ENCODE measurements at regions of chr7 and their contacts with region 1.

Region 1: DNA sequence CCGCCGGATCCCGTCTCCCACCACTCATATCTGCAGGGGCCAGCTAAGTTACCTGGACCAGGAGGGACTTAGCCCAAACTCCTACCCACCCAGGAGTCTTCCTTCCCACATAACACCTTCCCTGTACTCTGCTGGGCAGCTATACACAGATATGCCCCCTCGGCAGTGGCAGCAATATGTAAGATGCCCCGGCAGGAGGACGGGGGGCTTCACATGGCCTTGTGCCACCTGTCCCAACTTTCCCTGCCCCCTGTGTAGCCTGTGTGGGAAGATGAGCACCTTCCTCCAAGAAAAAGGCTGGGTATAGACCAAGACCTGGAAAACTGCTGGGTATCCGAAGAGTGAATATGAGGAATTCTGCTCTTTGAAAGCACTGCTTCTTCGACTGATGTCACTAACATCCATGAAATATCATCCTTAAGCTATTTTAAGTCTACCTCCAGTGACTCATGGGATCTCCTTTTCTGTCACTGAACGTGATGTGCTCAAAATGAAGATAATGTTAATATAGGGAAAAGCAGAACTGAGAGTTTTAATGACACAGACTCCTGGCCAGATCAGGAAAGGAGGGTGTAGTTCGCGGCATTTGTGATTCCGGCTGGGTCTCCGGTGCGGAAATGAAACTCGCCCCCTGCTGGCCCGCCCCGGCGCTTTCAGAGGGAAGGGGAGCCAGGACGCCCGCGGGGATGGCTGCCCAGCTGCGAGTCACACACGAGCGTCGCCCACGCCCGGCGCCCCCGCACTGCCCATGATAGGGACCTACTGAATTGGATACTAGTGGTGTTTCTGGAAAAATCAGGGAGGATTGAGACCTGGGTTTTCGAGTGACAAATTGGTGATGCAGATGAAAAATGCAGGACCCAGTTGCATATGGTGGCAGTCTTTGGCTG is 256.9 kb upstream of the NFE2L3 start:
- DNase-seq: peak; percentile 70 to 83
- ATAC-seq: peak; percentile 75

Region 2: DNA sequence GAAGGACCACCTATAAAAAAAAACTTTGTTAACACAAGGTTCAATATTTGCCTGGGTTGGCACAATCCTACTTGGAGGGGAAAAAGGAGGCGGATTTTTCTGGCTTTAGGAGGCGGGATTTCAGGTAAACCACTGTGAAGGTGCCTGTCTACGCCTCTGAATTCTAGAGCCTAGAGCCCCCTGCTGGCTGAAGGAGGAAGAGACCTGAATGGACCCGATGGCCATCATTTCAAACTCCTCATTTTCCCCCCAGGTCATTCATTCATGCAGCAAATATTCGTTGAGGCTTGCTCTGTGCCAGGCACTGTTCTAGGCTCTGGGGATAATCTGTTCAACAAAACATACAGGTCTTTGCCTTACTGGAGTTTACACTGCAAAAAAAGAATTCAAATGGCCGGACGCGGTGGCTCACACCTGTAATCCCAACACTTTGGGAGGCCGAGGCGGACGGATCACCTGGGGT is 166.6 kb after region 1 on chr7:
- intact Hi-C with region 1: loop called in 1 of 2 experiments (anchors 5 kb)
- DNase-seq: peak; percentile 61 to 88
- ATAC-seq: peak; percentile 96

Region 3: DNA sequence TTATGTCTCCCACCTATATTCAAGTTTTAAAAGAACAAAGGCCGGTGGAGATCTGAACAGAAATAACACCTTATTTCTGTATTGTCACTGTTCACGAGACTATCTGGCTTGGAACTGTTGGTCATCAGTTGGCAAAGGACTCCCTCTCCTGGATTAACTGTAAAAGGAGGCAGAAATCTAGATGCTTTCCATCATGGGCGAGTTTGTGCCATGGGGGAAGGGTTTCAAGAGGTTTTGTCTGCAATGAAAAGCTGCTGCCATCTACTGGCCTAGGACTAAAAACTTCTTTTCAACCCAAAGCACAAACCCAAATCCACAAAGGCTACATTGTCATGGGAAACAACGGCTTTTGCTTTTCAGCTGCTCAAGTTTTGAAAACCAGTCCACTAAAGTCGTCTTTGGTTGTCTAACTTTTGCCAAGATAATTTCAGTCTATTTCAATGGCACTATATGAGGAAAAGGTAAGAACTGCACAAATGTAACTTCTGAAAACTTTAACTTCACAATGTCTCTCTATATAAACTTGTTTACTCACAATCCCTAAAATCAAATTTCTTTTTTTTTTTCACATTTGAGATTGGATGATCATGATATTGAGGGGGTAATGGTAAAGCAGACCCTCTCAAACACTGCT is 772.5 kb after region 1 on chr7:
- intact Hi-C with region 1: loop called in 1 of 2 experiments (anchors 10 kb)
- DNase-seq: peak; percentile 47 to 75
- ATAC-seq: peak; percentile 97